ENCODE measurements at regions of chr19 and their contacts with region 1.

Region 1: GRCh38 chr19:6021878-6022569 is 44.1 kb upstream of the RANBP3 start:
- DNase-seq: peak; percentile 46 to 95
- H3K4me3 ChIP-seq: no peak overlapping the region; a peak in 2 of 8 replicates
- H3K27ac ChIP-seq: no peak overlapping the region
- H3K4me1 ChIP-seq: peaks cover 0 to 6% (median 0%) of the 10 kb centered on the region in 4 experiments; a peak in 2 of 7 replicates
- H3K27me3 ChIP-seq: peaks cover 0 to 4% (median under 1%) of the 10 kb centered on the region in 4 experiments; a peak in 4 of 7 replicates
- CTCF ChIP-seq: peak; percentile 84 to 93 (median 85)
- EP300 ChIP-seq: no peak
- POLR2A ChIP-seq: no peak
- RAD21 ChIP-seq: peak; percentile 91 to 92

Region 2: GRCh38 chr19:5934774-5935472 is 87.1 kb before region 1 on chr19:
- CTCF ChIA-PET with region 1: interaction called, 11 read pairs
- POLR2A ChIA-PET with region 1: no interaction called
- DNase-seq: no peak
- H3K4me3 ChIP-seq: no peak overlapping the region
- H3K27ac ChIP-seq: no peak overlapping the region
- H3K4me1 ChIP-seq: no peaks in the 10 kb centered on the region
- H3K27me3 ChIP-seq: no peaks in the 10 kb centered on the region
- CTCF ChIP-seq: no peak
- EP300 ChIP-seq: no peak
- POLR2A ChIP-seq: no peak
- RAD21 ChIP-seq: no peak

Region 3: DNA sequence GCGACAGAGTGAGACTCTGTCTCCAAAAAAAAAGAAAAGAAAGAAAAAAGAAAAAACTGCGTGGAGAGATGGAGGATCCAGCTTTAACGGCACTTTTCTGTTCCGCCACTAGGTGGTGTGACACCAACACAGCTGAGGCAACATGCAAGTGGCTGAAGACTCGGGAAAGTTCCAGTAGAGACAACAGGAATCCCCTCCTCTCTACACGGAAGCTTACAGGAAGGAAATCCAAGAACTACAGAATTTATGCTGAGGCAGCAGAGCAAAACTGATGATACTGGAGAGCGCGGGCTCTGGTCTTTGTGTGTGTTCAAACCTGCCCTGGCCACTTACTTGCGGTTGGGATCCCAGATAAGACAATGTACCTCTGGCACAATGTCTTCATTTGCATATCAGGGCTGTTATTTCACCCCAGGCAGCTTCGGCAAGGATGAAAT is 54.0 kb before region 1 on chr19:
- CTCF ChIA-PET with region 1: interaction called, 18 read pairs
- POLR2A ChIA-PET with region 1: interaction called, 4 read pairs
- DNase-seq: peak in 1 of 2 experiments; percentile 81
- H3K4me3 ChIP-seq: peak overlapping the region in 1 of 4 experiments; percentile 7; a peak in 2 of 8 replicates
- H3K27ac ChIP-seq: peak overlapping the region; percentile 57
- H3K4me1 ChIP-seq: peaks cover 9 to 16% (median 13%) of the 10 kb centered on the region in 4 experiments
- H3K27me3 ChIP-seq: no peaks in the 10 kb centered on the region
- CTCF ChIP-seq: peak; percentile 69 to 82 (median 78)
- EP300 ChIP-seq: no peak
- POLR2A ChIP-seq: no peak
- RAD21 ChIP-seq: peak; percentile 42 to 59

Region 4: DNA sequence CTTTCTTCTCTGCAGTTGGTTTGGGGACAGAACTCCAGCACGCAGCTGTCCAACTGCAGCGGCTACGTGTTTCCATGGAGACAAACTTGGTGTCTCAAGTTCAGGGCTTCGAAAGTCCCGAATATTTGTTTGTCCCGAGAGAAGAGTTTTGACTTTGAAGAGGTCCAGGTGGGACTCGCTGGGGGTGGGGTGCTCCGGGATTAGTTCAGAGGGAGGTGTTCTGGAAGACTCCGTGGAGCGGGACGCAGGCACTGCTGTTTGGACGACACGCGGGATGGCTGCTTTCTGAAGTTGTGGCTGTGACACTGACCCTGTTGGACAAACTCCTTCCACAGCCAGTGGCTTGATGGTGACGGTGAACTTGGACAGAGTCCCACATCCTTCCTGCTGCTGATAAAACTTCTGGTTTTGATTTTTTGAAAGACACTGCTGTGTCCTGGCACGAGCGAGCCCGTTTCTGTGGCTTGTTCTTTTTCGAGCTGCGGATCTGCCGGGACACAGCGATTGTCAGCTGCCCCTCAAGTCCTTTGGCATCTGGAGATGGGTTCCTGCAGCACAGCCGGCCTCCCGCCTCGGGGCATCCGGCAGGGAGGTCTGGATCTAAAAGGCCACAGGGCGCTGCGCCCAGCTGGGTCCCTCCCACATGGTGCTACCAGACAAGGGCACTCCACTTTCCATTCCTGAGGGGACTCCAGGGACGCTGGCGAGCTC is 28.2 kb before region 1 on chr19:
- CTCF ChIA-PET with region 1: interaction called, 306 read pairs
- POLR2A ChIA-PET with region 1: interaction called, 7 read pairs
- DNase-seq: no peak
- H3K4me3 ChIP-seq: no peak overlapping the region
- H3K27ac ChIP-seq: no peak overlapping the region
- H3K4me1 ChIP-seq: peaks cover 0 to 3% (median 0%) of the 10 kb centered on the region in 4 experiments; a peak in 1 of 7 replicates
- H3K27me3 ChIP-seq: peaks cover 0 to 3% (median 0%) of the 10 kb centered on the region in 4 experiments; a peak in 2 of 7 replicates
- CTCF ChIP-seq: no peak
- EP300 ChIP-seq: no peak
- POLR2A ChIP-seq: no peak
- RAD21 ChIP-seq: no peak

Region 5: GRCh38 chr19:6032827-6033226 is 10.8 kb after region 1 on chr19:
- CTCF ChIA-PET with region 1: interaction called, 25 read pairs
- POLR2A ChIA-PET with region 1: no interaction called
- DNase-seq: peak in 1 of 2 experiments; percentile 16
- H3K4me3 ChIP-seq: no peak overlapping the region
- H3K27ac ChIP-seq: no peak overlapping the region
- H3K4me1 ChIP-seq: no peaks in the 10 kb centered on the region
- H3K27me3 ChIP-seq: no peaks in the 10 kb centered on the region
- CTCF ChIP-seq: no peak
- EP300 ChIP-seq: no peak
- POLR2A ChIP-seq: no peak
- RAD21 ChIP-seq: no peak